Sciatic nerve (tissue), 2 donors: ENCODE measurements at regions of chr20 and their contacts with region 1.

Region 1: GRCh38 chr20:5529331-5530148 is 212.8 kb upstream of the PROKR2 start:
- DNase-seq: peak; percentile 90
- ATAC-seq: peak; percentile 93

Region 2: DNA sequence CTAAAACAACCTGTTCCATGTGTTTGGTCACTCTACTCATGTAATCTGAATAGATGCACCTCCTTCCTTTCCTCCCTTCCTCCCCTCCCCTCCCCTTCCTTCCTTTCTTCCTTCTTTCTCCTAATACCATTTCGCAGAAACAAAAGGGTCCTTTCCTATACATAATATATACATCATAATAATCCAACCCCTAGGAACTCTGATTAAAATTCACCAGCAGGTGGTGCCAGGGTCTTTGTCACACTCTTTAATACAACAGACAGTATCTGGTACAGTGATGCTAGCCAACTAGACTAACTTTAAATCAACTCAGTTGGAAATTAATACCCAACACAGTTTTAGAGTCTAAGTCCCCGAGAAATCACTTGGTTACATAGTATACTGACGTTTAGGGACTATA is 39.5 kb after region 1 on chr20:
- intact Hi-C with region 1: no loop called
- DNase-seq: no peak
- ATAC-seq: peak; percentile 49

Region 3: GRCh38 chr20:5788385-5788895 is 258.9 kb after region 1 on chr20:
- intact Hi-C with region 1: loop called (anchors 10 kb)
- DNase-seq: peak; percentile 78
- ATAC-seq: peak; percentile 95

Region 4: GRCh38 chr20:6075428-6076219 is 546.1 kb after region 1 on chr20:
- intact Hi-C with region 1: loop called (anchors 5 kb)
- DNase-seq: no peak
- ATAC-seq: peak; percentile 41